ENCODE measurements at regions of chr10 and their contacts with region 1.

Region 1: DNA sequence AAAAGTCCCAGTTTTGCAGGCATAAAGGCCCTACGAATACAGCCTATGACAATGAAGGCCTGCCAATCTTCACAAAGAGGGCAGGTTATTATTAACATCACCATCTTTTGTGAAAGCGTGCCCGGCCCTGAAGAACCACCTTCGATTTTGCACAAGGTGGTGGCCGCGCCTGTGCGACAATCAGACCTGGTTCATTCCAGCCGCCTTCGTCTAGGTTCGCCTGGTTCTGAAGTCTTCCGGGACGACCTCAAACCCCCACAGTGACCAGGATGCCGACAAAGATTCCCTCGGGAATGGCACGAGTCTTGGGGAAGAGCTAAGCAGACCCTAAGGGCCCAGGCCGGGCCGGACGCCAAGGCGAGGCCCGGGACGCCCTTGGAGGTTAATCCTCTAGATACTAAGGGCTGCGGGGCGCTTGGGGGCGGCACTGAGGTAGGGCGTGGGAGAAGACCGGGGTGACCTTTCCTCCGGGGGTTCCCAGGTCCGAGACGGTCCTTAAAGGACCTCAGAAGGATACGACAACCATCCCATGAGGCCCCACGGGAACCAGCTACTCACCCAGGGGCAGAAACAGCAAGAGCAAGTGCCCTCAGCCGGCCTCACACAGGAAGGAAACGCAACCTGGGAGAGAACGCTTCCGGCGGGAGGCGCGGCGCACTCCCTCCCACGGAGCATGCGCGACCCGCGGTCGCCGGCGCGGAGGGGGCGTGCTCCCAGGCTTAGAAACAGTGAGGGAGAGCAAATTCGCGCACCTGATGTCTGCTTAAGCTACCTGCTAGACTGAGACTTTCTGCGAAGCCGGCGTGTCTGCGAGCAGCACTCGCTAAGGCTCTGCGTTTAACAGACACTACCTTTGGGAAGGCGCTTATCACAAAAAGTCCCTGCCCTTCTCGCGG is at the start of gene ATAD1:
- DNase-seq: peak; percentile 93
- ATAC-seq: peak; percentile 88
- H3K4me3 Mint-ChIP-seq: peak within 1 kb of the TSS; percentile 89
- H3K27ac Mint-ChIP-seq: peak within 1 kb of the TSS; percentile 94
- H3K4me1 Mint-ChIP-seq: peaks cover 30% of the 10 kb centered on the region
- H3K27me3 Mint-ChIP-seq: no peaks in the 10 kb centered on the region
- total RNA-seq, gene ATAD1: 34.2 to 46.8 TPM

Region 2: DNA sequence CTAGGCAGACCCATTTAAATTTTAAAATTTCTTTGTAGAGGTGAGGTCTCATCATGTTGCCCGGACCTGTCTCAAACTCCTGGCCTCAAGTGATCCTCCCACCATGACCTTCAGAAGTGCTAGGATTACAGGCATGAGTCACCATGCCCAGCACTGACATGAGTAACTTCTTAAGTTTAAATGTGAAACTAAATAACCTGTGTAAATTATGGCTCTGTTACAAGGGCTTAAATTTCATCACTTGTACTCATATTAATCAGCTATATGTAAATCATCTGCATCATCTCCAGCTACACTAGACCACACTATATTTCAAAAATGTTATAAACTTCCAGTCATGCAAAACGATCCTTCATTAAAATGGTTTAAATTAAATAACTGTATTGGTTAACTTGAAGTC is 56.0 kb before region 1 on chr10:
- CTCF ChIA-PET with region 1: interaction called, 4 read pairs
- POLR2A ChIA-PET with region 1: no interaction called
- intact Hi-C with region 1: loop called (anchors 1 to 2 kb)
- DNase-seq: peak; percentile 78
- ATAC-seq: peak; percentile 96
- H3K4me3 Mint-ChIP-seq: no peak overlapping the region
- H3K27ac Mint-ChIP-seq: peak overlapping the region; percentile 78
- H3K4me1 Mint-ChIP-seq: peaks cover 44% of the 10 kb centered on the region
- H3K27me3 Mint-ChIP-seq: no peaks in the 10 kb centered on the region

Region 3: DNA sequence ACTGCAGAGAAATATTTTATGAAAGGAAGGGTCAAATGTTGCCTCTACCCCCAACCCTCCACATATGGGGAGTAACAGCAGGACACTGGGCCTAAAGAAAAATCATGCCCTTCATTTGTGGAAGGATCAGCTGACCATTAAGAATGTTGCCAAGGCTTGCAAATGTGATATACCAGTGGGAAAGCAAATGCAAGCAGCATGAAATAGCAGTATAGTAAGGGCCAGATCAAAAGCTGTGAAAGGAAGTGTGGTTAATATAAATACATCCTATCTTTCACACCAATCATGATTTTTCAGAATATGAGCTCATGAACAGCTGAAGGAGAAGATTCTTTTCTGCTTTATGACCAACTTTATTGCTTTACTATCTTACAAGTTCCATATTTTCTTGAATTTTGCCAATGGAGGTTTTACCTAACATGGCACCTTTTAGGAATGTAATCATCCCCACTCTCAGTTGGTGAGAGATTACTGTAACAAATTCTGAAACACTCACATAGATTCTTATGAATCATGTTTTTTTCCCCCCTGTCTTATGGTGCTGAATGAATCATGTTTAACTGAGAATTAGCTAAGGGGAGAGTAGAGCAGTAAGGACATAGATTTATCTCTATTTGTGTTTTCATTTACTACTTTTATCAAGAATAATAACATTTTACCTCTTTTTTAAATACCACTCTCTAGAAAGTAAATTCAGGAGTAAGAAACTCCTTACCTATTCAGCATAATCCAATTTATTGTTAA is 12.3 kb after region 1 on chr10:
- CTCF ChIA-PET with region 1: interaction called, 27 read pairs
- POLR2A ChIA-PET with region 1: interaction called, 9 read pairs
- intact Hi-C with region 1: no loop called
- DNase-seq: no peak
- ATAC-seq: peak; percentile 93
- H3K4me3 Mint-ChIP-seq: no peak overlapping the region
- H3K27ac Mint-ChIP-seq: no peak overlapping the region
- H3K4me1 Mint-ChIP-seq: peaks cover 42% of the 10 kb centered on the region
- H3K27me3 Mint-ChIP-seq: no peaks in the 10 kb centered on the region

Region 4: GRCh38 chr10:87931836-87932230 is 114.0 kb after region 1 on chr10:
- CTCF ChIA-PET with region 1: no interaction called
- POLR2A ChIA-PET with region 1: no interaction called
- intact Hi-C with region 1: loop called in 1 of 2 experiments (anchors 5 kb)
- DNase-seq: no peak
- ATAC-seq: peak; percentile 58
- H3K4me3 Mint-ChIP-seq: no peak overlapping the region
- H3K27ac Mint-ChIP-seq: no peak overlapping the region
- H3K4me1 Mint-ChIP-seq: peaks cover 46% of the 10 kb centered on the region
- H3K27me3 Mint-ChIP-seq: no peaks in the 10 kb centered on the region

Region 5: GRCh38 chr10:88064608-88065382 is 246.9 kb after region 1 on chr10:
- CTCF ChIA-PET with region 1: no interaction called
- POLR2A ChIA-PET with region 1: interaction called, 3 read pairs
- intact Hi-C with region 1: loop called in 1 of 2 experiments (anchors 5 kb)
- DNase-seq: peak; percentile 52
- ATAC-seq: peak; percentile 49
- H3K4me3 Mint-ChIP-seq: no peak overlapping the region
- H3K27ac Mint-ChIP-seq: no peak overlapping the region
- H3K4me1 Mint-ChIP-seq: peaks cover 69% of the 10 kb centered on the region
- H3K27me3 Mint-ChIP-seq: peaks cover 24% of the 10 kb centered on the region

Region 6: DNA sequence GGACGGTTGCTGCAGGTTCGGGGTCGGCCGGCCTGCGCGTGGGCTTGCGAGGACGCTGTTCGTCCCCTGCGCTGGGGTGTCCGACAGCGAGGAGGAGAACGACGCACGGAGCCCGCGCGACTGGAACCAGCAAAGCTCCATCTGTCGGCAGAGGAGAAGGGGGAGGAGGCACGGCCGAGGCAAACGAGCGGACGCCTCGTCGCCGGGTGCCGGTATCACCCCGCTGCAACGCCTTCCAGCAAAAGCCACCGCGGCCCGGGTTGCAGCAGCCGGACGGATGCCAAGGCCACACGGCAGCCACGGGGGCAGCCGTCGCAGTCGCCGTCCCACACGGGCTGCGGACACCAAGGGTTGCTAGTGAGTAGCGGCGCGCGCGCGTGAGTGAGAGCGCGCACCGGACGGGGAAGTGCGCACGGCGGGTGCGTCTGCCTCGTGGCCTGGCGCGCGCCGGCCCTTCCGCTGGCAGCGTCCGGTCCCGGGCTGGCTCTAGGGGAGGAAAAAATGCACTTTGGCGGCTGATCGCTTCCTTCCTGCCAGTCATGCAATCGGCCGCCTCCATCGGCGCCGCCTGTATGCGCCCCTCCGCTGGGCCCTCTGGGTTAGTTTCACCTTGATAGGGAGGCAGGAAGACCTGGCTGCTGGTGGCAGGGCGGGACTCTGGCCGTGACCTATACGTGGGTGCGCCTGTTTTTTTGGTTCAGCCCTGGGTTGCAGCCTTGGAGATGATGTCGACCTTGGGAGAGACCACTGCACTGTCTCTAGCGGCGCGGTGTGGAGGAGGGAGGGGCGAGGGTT is 1062.6 kb after region 1 on chr10:
- CTCF ChIA-PET with region 1: no interaction called
- POLR2A ChIA-PET with region 1: no interaction called
- intact Hi-C with region 1: loop called in 1 of 2 experiments (anchors 5 kb)
- DNase-seq: peak; percentile 87
- ATAC-seq: peak; percentile 81
- H3K4me3 Mint-ChIP-seq: peak overlapping the region; percentile 97
- H3K27ac Mint-ChIP-seq: peak overlapping the region; percentile 98
- H3K4me1 Mint-ChIP-seq: peaks cover 65% of the 10 kb centered on the region
- H3K27me3 Mint-ChIP-seq: no peaks in the 10 kb centered on the region